Ovary (tissue), 10 donors: ENCODE measurements at regions of chr3 and their contacts with region 1.

Region 1: DNA sequence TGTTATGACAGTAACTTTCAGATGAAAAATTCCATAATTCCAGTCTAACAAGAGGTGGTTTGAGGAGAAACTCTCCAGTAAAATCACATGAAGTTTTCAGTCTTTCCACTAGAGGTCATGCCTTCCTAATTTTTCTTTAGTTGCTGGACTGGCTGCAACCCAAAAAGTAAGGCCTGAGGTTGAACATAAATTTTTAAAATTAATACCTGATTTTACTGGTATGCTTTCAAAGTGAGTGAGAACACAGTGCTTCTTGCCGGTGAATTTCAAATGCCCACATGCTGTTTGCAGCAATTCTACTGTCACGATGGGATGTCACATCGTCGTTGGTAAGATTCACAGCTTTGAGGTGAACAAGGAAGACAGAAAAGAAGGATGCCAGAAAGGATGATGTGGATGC is 89.0 kb upstream of the FGF12 start:
- DNase-seq: no peak
- H3K4me3 ChIP-seq: no peak overlapping the region
- H3K27ac ChIP-seq: no peak overlapping the region
- H3K4me1 ChIP-seq: peaks cover 2% of the 10 kb centered on the region
- H3K27me3 ChIP-seq: no peaks in the 10 kb centered on the region
- CTCF ChIP-seq: peak; percentile 54 to 74 (median 73)
- EP300 ChIP-seq: no peak
- POLR2A ChIP-seq: no peak

Region 2: GRCh38 chr3:192917404-192918274 is 101.3 kb after region 1 on chr3 and contains the start of gene MB21D2:
- intact Hi-C with region 1: loop called in 1 of 4 experiments (anchors 2 kb)
- DNase-seq: peak; percentile 81 to 86 (median 83)
- H3K4me3 ChIP-seq: peak within 1 kb of the TSS; percentile 84
- H3K27ac ChIP-seq: peak within 1 kb of the TSS; percentile 67 to 85
- H3K4me1 ChIP-seq: peaks cover 2% of the 10 kb centered on the region
- H3K27me3 ChIP-seq: no peaks in the 10 kb centered on the region
- CTCF ChIP-seq: no peak
- EP300 ChIP-seq: no peak
- POLR2A ChIP-seq: no peak
- total RNA-seq, gene MB21D2: 4.5 to 13.9 (median 6.0) TPM

Region 3: DNA sequence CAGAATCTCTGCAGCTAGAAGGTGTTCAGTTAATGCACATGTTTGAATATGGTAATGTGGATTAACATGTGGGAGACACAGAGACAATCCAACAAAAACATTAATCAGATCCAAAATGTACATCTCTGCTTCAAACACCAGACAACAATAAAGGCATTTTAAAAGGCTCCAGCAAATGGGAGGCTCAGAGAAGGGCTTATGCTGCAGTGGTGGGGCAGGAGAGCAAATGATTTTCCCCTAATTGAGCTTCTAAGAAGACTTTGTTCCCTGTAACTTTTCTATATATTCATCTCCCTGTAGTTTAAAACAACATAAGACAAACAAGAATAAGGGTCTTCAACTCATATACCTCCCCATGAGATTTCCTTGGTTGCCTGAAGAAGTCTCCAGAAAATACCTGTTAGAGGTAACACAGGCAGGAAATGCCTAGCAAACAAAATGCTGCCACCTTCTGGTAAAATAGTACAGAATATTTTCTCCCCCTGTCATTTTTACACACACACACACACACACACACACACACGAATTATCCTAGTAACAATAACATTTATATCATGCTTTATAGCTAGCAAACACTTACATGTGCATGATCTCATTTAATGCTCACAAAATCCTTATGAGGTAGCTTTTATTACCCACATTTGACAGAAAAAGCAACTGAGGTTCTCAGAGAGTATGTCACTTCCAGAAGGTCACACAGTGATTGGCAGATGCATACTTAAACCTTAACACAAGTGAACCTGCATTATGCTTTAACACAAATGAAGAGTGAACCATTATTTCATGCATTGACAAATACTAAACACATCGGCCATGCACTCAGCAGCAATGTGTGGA is 224.7 kb after region 1 on chr3:
- intact Hi-C with region 1: loop called (anchors 5 to 10 kb)
- DNase-seq: no peak
- H3K4me3 ChIP-seq: no peak overlapping the region
- H3K27ac ChIP-seq: no peak overlapping the region
- H3K4me1 ChIP-seq: no peaks in the 10 kb centered on the region
- H3K27me3 ChIP-seq: no peaks in the 10 kb centered on the region
- CTCF ChIP-seq: peak in 2 of 3 donors; percentile 37 to 42
- EP300 ChIP-seq: no peak
- POLR2A ChIP-seq: no peak

Region 4: GRCh38 chr3:193046371-193046770 is 230.0 kb after region 1 on chr3:
- intact Hi-C with region 1: loop called in 3 of 4 experiments (anchors 5 to 10 kb)
- DNase-seq: no peak
- H3K4me3 ChIP-seq: no peak overlapping the region
- H3K27ac ChIP-seq: no peak overlapping the region
- H3K4me1 ChIP-seq: no peaks in the 10 kb centered on the region
- H3K27me3 ChIP-seq: no peaks in the 10 kb centered on the region
- CTCF ChIP-seq: no peak
- EP300 ChIP-seq: no peak
- POLR2A ChIP-seq: no peak

Region 5: DNA sequence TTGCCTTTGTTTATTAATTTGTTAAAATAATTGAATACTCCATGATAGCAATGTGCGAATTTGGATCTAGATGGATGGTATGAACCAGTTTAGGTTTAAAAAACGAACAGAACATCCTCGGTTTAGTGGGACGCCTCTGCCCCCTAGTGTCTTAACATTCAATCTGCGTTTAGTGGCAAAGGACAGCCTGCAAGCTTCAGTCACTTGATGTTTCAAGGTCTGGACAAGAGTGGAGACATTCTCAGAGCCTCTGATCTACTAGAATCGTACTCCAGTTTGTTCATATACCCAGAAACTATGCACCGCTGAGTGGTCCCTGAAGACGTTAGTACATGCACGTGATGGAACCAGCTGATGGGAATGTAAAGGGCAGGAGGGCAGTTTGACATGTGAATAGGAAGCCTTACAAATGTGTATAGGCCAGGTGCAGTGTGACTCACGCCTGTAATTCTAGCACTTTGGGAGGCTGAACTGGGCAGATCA is 756.1 kb after region 1 on chr3:
- intact Hi-C with region 1: loop called in 3 of 4 experiments (anchors 10 kb)
- DNase-seq: peak; percentile 38 to 59 (median 44)
- H3K4me3 ChIP-seq: no peak overlapping the region
- H3K27ac ChIP-seq: no peak overlapping the region
- H3K4me1 ChIP-seq: no peaks in the 10 kb centered on the region
- H3K27me3 ChIP-seq: no peaks in the 10 kb centered on the region
- CTCF ChIP-seq: peak; percentile 32 to 60 (median 43)
- EP300 ChIP-seq: no peak
- POLR2A ChIP-seq: no peak